B cell (primary cell): ENCODE measurements at regions of chr15 and their contacts with region 1.

Region 1: DNA sequence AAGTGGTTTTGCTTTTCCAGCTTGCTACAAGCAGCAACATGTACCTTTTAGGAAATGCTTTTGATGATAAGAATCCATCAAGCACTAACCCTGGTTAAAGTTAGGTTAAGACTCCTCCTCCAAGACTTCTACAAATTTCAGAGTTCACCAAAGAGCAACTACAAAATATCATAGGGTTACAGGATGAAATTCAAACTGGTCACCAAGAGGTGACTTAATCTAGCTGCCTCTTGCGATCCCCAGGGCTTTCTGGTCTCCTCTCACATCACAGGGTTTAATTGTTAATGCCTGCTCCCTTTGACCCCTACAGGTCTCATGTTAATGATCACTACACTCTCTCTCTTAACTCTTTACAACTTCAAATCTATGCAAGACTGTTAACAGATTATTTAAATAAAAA is 66.5 kb downstream of the DPH6 start:
- DNase-seq: no peak
- ATAC-seq: no peak
- H3K4me3 ChIP-seq: no peak overlapping the region
- H3K4me3 Mint-ChIP-seq: no peak overlapping the region
- H3K27ac ChIP-seq: no peak overlapping the region
- H3K27ac Mint-ChIP-seq: no peak overlapping the region
- H3K4me1 ChIP-seq: no peaks in the 10 kb centered on the region
- H3K4me1 Mint-ChIP-seq: no peaks in the 10 kb centered on the region
- H3K27me3 ChIP-seq: no peaks in the 10 kb centered on the region
- H3K27me3 Mint-ChIP-seq: no peaks in the 10 kb centered on the region
- CTCF ChIP-seq: no peak

Region 2: GRCh38 chr15:35410774-35411173 is 68.6 kb before region 1 on chr15:
- CTCF ChIA-PET with region 1: no interaction called
- POLR2A ChIA-PET with region 1: no interaction called
- intact Hi-C with region 1: loop called (anchors 10 kb)
- DNase-seq: no peak
- ATAC-seq: no peak
- H3K4me3 ChIP-seq: no peak overlapping the region
- H3K4me3 Mint-ChIP-seq: no peak overlapping the region
- H3K27ac ChIP-seq: no peak overlapping the region
- H3K27ac Mint-ChIP-seq: no peak overlapping the region
- H3K4me1 ChIP-seq: no peaks in the 10 kb centered on the region
- H3K4me1 Mint-ChIP-seq: no peaks in the 10 kb centered on the region
- H3K27me3 ChIP-seq: no peaks in the 10 kb centered on the region
- H3K27me3 Mint-ChIP-seq: no peaks in the 10 kb centered on the region
- CTCF ChIP-seq: no peak